ENCODE measurements at regions of chr20 and their contacts with region 1.

Region 1: GRCh38 chr20:48620519-48621254 is 207.1 kb downstream of the PREX1 start:
- DNase-seq: peak; percentile 86
- ATAC-seq: peak; percentile 90
- H3K4me3 ChIP-seq: 0 out of 6 replicates have a peak overlapping the region, but pooled peaks of 1 of the 3 experiments have one; percentile 5
- H3K27ac ChIP-seq: no peak overlapping the region
- H3K4me1 ChIP-seq: peaks cover 11% of the 10 kb centered on the region
- H3K27me3 ChIP-seq: peaks cover 17 to 28% of the 10 kb centered on the region in 2 experiments; a peak in 3 of 5 replicates
- CTCF ChIP-seq: peak; percentile 98
- EP300 ChIP-seq: no peak
- POLR2A ChIP-seq: no peak
- RAD21 ChIP-seq: peak; percentile 99

Region 2: DNA sequence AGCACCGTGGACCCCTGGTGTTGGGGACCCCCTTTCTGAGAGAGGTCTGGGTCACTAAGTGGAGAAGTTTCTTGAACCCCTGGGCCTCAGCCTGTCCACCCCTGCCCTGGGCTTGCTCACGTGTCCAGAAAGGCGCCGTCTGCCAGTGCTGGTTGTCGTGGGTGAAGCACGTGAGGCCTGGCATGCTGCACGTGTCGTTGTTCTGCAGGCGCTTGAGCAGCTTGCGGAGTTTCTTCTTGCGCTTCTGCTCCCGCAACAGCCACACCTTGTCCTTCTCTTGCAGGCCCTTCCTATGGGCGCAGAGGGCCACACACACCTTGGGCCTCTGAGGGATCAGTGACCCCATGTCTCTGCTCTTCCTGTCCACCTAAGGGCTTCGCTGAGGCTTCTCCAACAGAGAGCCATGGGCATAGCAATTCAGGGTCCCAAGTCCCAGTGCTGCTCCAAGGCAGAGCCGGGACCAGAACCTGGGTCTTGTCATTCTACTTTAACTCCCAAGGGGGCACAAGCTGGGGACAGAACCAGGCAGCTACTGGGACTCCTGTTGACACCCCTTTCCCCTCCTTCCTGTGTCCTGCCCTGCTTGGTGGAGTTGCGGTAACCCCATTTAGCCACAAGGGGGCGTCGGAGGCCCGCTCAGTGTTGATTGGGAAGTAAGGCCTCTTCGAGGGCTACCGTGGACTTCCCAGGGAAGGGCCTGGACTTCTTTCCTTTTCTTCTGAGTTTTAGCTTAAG is 957.2 kb before region 1 on chr20:
- CTCF ChIA-PET with region 1: interaction called, 24 read pairs
- POLR2A ChIA-PET with region 1: no interaction called
- in situ Hi-C with region 1: no loop called
- intact Hi-C with region 1: loop called (anchors 1 kb)
- DNase-seq: peak; percentile 83
- ATAC-seq: peak; percentile 77
- H3K4me3 ChIP-seq: no peak overlapping the region; a peak in 1 of 6 replicates
- H3K27ac ChIP-seq: no peak overlapping the region
- H3K4me1 ChIP-seq: peaks cover 39% of the 10 kb centered on the region
- H3K27me3 ChIP-seq: no peaks in the 10 kb centered on the region
- CTCF ChIP-seq: peak; percentile 99
- EP300 ChIP-seq: no peak
- POLR2A ChIP-seq: no peak
- RAD21 ChIP-seq: peak; percentile 87; the same call in 1 of the 2 replicates

Region 3: DNA sequence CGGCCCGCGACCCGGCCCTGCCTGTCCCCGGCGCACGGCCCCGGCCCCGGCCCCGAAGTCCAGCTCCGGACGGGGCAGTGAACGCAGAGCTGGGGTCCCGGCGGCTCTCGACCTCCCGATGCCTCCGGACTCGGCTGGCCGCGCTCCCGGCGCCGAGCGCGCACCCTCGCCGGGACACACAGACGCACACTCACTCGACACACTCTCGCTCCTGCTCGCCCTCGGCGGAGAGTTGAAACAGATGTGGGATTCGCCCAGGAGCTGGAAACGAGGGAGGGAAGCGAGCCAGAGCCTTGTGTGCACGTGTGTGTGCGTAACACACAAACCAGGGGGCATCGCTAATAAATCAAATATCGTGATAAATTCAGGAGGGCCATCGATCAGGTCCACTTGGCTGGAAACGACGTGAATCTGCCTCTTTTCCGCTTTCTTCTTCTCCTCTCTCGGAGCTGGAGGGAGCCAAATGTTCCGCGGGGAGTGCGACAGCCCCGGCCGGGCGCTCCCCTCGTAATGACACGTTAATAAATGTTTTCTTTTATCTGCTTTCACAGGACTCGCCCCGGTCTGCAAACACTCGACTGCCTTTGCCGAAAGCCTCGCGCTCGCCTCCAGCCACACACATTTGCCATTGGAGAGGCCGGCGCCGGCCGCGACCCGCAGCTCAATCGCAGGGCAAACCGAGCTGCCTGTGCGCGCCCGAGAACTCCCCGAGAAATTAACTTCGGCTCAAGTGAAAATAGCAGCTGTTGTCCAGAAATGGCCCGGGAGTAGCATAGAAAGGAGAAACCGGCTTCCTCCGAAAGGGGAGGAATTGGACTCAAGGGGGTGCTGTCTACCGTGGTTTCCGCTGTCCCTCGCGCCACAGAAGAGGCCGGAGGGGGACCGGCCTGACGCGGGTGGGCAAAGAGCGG is 834.6 kb before region 1 on chr20:
- CTCF ChIA-PET with region 1: interaction called, 30 read pairs
- POLR2A ChIA-PET with region 1: interaction called, 3 read pairs
- in situ Hi-C with region 1: loop called (anchors 5 kb)
- intact Hi-C with region 1: loop called (anchors 1 kb)
- DNase-seq: peak; percentile 82
- ATAC-seq: peak; percentile 82
- H3K4me3 ChIP-seq: peak overlapping the region; percentile 53 to 76 (median 72)
- H3K27ac ChIP-seq: no peak overlapping the region
- H3K4me1 ChIP-seq: peaks cover 42% of the 10 kb centered on the region
- H3K27me3 ChIP-seq: peaks cover 6 to 52% of the 10 kb centered on the region in 2 experiments; a peak in 4 of 5 replicates
- CTCF ChIP-seq: peak; percentile 95
- EP300 ChIP-seq: no peak
- POLR2A ChIP-seq: no peak
- RAD21 ChIP-seq: peak; percentile 94

Region 4: GRCh38 chr20:48188657-48189551 is 431.8 kb before region 1 on chr20:
- CTCF ChIA-PET with region 1: no interaction called
- POLR2A ChIA-PET with region 1: no interaction called
- in situ Hi-C with region 1: no loop called
- intact Hi-C with region 1: loop called (anchors 1 kb)
- DNase-seq: peak; percentile 63
- ATAC-seq: peak; percentile 74
- H3K4me3 ChIP-seq: no peak overlapping the region
- H3K27ac ChIP-seq: no peak overlapping the region
- H3K4me1 ChIP-seq: peaks cover 13% of the 10 kb centered on the region
- H3K27me3 ChIP-seq: peaks cover 1 to 3% of the 10 kb centered on the region in 2 experiments; a peak in 1 of 5 replicates
- CTCF ChIP-seq: peak; percentile 81
- EP300 ChIP-seq: no peak
- POLR2A ChIP-seq: no peak
- RAD21 ChIP-seq: peak; percentile 80

Region 5: GRCh38 chr20:48350313-48351008 is 270.2 kb before region 1 on chr20:
- CTCF ChIA-PET with region 1: interaction called, 25 read pairs
- POLR2A ChIA-PET with region 1: no interaction called
- in situ Hi-C with region 1: no loop called
- intact Hi-C with region 1: loop called (anchors 1 kb)
- DNase-seq: peak; percentile 59
- ATAC-seq: peak; percentile 89
- H3K4me3 ChIP-seq: no peak overlapping the region
- H3K27ac ChIP-seq: no peak overlapping the region
- H3K4me1 ChIP-seq: peaks cover 6% of the 10 kb centered on the region
- H3K27me3 ChIP-seq: peaks cover 0 to 8% of the 10 kb centered on the region in 2 experiments; a peak in 2 of 5 replicates
- CTCF ChIP-seq: peak; percentile 82
- EP300 ChIP-seq: no peak
- POLR2A ChIP-seq: no peak
- RAD21 ChIP-seq: peak; percentile 91

Region 6: DNA sequence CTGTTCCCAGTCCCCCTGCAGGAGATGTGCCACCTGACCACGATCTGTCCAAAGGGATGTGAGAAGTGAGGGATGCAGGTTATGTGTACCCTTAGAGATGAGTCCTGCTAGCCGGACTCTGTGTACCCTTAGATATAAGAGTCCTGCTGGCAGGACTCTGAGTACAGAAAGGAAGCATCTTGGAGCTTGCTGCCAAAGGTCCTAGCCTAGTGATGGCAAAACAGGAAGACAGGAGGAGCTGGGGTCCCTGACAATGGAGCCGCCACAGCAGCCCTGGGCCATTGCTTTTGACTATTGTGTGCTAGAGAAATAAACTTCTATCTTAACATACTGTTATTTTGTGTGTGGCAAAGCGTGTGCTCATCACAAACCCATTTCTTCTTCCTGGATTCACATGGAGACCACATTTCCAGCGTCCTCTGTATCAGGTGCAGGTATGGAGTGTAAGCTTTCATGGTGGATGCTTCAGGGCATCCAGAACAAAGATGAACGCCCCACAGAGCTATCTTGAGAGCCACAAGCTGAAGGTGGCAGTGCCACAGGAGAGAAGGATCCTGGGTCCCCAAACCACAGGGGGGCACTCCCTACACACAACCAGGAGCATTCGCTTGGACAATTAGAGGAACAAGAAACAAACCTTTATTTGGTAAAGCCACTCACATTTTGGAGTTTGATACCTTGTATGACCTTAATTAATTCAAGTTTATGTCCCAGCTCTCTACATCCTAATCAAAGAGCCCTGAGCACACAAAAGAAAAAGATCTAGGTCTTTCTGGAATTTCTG is 199.3 kb before region 1 on chr20:
- CTCF ChIA-PET with region 1: interaction called, 5 read pairs
- POLR2A ChIA-PET with region 1: no interaction called
- in situ Hi-C with region 1: loop called (anchors 25 kb)
- intact Hi-C with region 1: loop called (anchors 1 kb)
- DNase-seq: no peak
- ATAC-seq: no peak
- H3K4me3 ChIP-seq: no peak overlapping the region
- H3K27ac ChIP-seq: no peak overlapping the region
- H3K4me1 ChIP-seq: no peaks in the 10 kb centered on the region
- H3K27me3 ChIP-seq: peaks cover 0 to 45% of the 10 kb centered on the region in 2 experiments; a peak in 3 of 5 replicates
- CTCF ChIP-seq: peak; percentile 41
- EP300 ChIP-seq: no peak
- POLR2A ChIP-seq: no peak
- RAD21 ChIP-seq: no peak; the same call in 1 of the 2 replicates

Measured in HepG2 (cell line).